ENCODE measurements at regions of chr2 and their contacts with region 1.

Region 1: DNA sequence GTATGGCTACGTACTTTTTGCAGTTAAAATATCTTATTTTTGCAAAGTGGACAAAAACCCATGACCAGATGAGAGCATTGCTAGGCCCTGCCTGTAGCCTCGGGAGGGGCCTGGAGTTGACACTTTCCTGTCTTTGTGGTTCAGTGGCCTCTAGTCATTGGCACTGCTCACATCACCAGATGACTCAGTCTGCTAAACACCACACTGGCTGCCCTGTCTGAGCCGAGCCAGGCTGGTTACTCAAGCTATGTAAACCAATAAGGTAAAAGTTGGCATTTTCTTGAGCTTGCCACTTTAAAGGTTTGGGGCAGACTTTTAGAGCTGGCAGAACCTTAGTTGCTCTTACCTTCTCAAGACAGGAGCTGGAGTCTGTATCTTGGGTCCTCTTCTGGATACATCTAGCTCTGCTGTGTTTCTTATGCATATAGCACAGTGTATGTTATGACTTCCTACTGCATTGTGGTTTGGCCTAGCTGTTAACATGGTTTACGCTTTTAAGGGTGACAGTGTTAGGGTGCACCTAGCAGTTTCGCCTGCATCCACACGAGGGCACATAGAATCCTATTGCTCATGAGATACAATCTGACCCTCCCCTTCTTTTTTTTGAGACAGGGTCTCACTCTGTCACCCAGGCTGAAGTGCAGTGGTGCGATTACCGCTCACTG is 76.4 kb downstream of the AP1S3 start:
- DNase-seq: peak; percentile 83
- H3K4me3 Mint-ChIP-seq: no peak overlapping the region
- H3K27ac Mint-ChIP-seq: peak overlapping the region; percentile 99
- H3K4me1 Mint-ChIP-seq: peaks cover 52% of the 10 kb centered on the region
- H3K27me3 Mint-ChIP-seq: no peaks in the 10 kb centered on the region
- CTCF ChIP-seq: peak; percentile 52

Region 2: DNA sequence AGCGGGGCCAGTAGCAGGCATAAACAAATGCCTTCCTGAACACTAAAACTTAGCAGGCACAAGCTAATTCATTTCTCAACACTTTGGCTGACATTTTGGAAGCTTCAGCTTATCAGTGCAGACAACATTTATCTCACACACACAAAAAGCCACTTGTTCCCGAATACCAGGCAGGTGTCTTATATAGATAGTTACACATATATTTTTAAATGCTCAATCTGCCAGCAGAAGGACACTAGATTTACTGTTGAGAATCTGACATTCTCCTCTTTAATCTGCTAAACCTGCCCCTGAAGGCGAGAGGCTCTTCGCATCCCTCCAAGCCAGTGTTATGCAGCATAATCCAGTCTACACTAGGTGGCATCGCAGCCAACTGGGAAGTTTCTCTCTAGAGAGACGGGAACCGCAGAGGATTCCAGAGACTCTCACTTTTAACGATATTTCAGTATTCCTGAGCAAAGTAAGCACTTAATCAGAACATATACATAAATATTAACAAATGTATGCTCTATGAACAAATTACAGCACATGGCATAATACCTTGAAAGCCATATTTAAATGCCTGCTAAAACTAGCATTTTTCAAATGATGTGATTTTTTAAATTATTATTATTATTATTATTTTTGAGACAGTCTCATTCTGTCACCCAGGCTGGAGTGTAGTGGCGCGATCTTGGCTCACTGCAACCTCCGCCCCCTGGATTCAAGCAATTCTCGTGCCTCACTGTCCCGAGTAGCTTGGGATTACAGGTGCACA is 68.6 kb before region 1 on chr2:
- CTCF ChIA-PET with region 1: interaction called, 20 read pairs
- intact Hi-C with region 1: loop called (anchors 2 kb)
- DNase-seq: peak; percentile 63
- H3K4me3 Mint-ChIP-seq: no peak overlapping the region
- H3K27ac Mint-ChIP-seq: no peak overlapping the region
- H3K4me1 Mint-ChIP-seq: peaks cover 38% of the 10 kb centered on the region
- H3K27me3 Mint-ChIP-seq: no peaks in the 10 kb centered on the region
- CTCF ChIP-seq: peak; percentile 55

Region 3: DNA sequence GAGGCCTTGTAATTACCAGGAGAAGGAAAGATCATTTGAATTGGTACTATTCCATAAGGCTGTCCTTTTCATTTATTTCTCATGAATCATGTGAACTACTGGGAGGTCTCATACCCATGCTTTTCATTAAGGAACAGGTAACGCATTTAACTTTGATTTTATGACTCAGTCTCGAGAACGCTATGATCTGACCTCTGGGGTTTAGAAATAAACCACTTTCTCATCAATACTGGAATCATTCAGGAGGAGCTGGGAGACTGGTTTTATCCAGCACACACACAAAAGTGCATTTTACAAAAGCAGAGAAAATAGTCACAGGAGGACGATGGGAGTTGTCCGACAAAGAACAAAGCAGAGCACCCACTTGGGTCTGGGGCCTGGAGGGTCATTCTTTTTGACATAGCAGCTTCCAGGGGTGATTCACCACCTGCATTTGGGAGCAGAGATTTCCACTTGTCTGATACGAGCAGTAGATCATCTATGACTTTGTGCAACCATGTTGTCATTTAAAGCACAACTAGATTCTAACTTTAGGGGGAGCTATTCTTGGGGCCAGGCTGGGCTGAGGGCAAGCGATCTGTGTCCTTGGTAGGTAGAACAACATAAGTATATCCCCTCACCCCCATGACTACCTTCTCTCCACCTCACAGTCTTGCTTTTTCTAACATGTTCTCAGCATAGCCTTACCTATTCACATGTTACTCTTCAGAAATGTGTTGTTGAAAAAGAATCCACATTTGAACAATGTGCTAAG is 62.9 kb before region 1 on chr2:
- CTCF ChIA-PET with region 1: interaction called, 20 read pairs
- intact Hi-C with region 1: loop called (anchors 1 kb)
- DNase-seq: peak; percentile 50
- H3K4me3 Mint-ChIP-seq: peak overlapping the region; percentile 34
- H3K27ac Mint-ChIP-seq: peak overlapping the region; percentile 97
- H3K4me1 Mint-ChIP-seq: peaks cover 72% of the 10 kb centered on the region
- H3K27me3 Mint-ChIP-seq: no peaks in the 10 kb centered on the region
- CTCF ChIP-seq: peak; percentile 27

Region 4: DNA sequence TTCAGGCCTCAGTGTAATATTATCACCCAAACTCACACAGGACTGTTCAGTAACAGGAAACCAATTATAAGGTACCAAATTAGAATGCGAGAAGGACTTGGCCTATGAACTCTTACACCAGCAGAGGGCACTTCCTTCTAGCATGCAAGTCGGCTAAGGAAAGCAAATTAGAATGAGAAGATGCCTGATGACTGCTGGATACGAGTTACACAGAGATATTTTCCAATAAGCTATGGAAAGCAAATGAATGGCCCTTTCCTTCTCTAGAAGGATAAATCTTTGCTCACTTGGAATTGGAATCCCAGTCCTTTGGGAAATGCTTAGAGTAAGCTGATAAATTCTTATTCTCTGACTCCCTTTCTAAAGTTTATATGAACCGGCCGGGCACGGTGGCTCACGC is 33.4 kb before region 1 on chr2:
- CTCF ChIA-PET with region 1: interaction called, 15 read pairs
- intact Hi-C with region 1: loop called (anchors 1 kb)
- DNase-seq: peak; percentile 51
- H3K4me3 Mint-ChIP-seq: no peak overlapping the region
- H3K27ac Mint-ChIP-seq: peak overlapping the region; percentile 20
- H3K4me1 Mint-ChIP-seq: peaks cover 61% of the 10 kb centered on the region
- H3K27me3 Mint-ChIP-seq: no peaks in the 10 kb centered on the region
- CTCF ChIP-seq: peak; percentile 61

Region 5: DNA sequence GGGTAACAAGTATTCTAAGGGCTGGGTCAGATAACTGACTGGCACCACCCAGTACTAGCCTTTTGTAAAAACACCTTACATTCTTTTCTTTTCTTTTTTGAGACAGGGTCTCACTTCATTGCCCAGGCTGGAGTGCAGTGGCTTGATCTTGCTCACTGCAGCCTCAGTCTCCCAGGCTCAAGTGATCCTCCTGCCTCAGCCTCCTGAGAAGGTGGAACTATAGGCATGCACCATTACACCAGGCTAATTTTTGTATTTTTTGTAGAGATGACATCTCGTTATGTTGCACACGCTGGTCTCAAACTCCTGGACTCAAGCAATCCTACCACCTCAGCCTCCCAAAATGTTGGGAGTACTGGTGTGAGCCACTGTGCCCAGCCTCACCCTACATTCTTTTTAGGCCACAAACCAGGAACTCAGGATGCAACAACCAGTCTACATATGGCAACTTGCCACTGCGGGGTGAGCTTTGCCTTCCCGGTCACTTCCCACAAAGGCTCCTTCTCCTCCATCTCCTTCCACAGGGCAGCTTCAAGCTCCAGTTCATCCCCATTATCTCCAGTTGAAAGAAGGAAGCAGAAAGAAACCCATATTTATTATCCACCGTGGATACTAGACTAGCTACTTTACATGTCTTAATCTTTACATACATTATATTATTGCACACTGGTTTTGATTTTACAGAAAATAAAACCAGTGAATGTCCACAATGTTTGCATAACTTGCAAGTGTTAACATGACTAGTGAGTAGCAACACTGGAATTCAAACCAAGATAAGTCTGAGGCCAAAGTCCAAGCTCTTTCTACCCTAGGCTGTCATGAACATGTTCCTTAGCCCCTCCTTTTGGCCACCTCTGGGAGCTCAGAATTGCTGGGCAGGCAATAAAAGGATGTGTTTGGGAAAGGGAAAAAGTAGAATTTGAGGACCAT is 100.1 kb after region 1 on chr2:
- CTCF ChIA-PET with region 1: interaction called, 12 read pairs
- intact Hi-C with region 1: loop called (anchors 2 kb)
- DNase-seq: peak; percentile 90
- H3K4me3 Mint-ChIP-seq: peak overlapping the region; percentile 61
- H3K27ac Mint-ChIP-seq: peak overlapping the region; percentile 96
- H3K4me1 Mint-ChIP-seq: peaks cover 69% of the 10 kb centered on the region
- H3K27me3 Mint-ChIP-seq: no peaks in the 10 kb centered on the region
- CTCF ChIP-seq: no peak

Measured in Calu3 (cell line).